AG04450 (cell line): ENCODE measurements at regions of chr3 and their contacts with region 1.

Region 1: DNA sequence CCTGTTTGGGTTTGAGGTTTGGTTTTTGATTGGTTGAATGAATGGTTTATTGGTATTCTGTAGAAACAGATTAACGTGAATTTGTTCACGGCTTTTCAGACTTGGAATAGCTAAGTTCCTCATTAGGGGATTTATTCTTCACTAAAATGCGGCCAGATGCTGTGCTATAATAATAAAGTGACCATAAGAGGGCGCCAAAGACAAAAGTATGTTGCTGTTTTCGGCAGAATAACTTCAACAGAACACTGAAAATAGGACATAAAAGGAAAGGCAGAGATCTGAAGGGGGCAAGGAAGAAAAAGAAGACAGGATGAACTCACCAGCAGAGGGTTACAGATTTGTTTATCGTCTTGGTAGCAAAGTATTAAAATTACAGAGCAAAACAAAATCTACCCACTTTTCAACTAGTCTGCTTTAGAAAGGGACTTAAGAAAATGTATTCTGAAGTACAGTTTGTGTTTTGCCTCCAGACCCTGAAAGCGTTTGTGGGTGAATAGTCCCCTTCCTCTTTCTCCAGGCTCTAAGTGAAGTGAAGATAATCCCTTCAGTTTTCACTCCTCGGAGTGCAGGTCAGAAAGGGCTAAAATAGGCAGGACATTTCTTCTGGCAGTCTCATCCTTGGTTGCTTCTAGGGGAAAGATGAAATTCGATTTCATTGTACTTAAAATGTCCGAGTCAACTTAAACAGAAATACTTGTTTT is 147.6 kb downstream of the IL20RB start:
- DNase-seq: peak; percentile 30
- H3K4me3 ChIP-seq: no peak overlapping the region
- H3K27ac ChIP-seq: no peak overlapping the region
- H3K27me3 ChIP-seq: peaks cover 8% of the 10 kb centered on the region
- CTCF ChIP-seq: peak; percentile 71

Region 2: DNA sequence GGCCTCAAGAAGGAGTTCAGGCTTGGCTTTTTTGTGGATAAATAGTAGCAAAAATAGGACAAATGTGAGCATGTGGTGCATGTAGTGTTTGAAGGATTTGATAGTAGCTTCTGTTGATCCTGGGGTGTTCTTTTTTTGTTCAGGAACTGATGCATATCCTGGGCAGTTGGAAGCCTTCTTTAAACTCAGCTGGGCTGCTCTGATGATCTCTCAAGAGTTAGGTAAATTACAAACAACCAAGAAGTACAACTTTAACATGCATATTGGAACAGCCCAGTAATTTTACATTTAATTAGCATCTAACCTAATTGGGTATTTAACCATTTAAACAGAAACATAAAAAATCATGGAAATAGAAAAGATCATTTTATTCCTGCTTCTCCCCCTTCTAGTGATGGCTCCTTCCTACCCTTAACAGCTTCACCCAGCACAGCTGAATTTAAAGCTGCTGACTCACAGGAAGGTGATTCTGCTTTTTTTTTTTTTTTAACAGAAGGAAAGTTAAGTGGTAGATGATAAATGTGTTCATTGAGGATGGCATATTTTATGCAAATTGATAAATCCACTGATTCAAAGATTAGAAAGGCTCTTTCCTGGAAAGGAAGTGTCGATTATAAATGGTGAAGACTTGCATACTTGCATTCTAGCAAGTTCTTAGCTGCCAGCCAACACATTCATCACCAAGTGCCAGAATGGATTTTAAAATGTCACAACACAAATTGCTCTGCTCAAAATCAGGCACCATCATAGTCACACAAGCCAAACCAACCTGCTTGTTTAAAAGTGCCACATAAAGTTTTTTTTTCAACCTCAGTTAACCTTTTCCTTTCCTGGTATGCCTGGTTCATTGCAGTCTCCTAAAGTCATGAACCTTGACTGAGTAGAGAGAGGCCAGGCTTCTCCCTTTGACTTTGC is 266.5 kb before region 1 on chr3:
- CTCF ChIA-PET with region 1: no interaction called
- POLR2A ChIA-PET with region 1: no interaction called
- DNase-seq: no peak
- H3K4me3 ChIP-seq: no peak overlapping the region
- H3K27ac ChIP-seq: no peak overlapping the region
- H3K27me3 ChIP-seq: no peaks in the 10 kb centered on the region
- CTCF ChIP-seq: no peak

Region 3: DNA sequence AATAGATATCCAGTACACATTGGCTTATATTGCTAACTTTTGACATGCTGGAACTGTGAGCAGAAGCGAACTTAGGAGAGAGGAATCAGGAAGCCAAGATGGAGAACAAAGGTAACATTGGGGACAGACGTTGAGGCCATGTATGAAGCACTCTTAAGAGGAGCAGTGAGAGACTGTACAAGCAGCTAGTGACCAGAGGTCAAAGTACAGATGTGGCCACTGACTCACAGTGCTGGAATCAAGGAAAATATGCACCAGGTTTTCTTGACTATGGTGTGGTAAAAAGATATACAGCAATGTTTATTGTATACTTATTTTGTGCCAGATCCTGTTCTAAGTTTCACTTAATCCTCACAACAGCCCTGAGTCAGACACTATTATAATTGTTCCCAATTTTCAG is 149.6 kb before region 1 on chr3:
- CTCF ChIA-PET with region 1: no interaction called
- POLR2A ChIA-PET with region 1: no interaction called
- DNase-seq: peak; percentile 81
- H3K4me3 ChIP-seq: no peak overlapping the region
- H3K27ac ChIP-seq: peak overlapping the region; percentile 68
- H3K27me3 ChIP-seq: no peaks in the 10 kb centered on the region
- CTCF ChIP-seq: no peak

Region 4: GRCh38 chr3:137084586-137084985 is 20.8 kb before region 1 on chr3:
- CTCF ChIA-PET with region 1: interaction called, 14 read pairs
- POLR2A ChIA-PET with region 1: no interaction called
- DNase-seq: no peak
- H3K4me3 ChIP-seq: no peak overlapping the region
- H3K27ac ChIP-seq: no peak overlapping the region
- H3K27me3 ChIP-seq: no peaks in the 10 kb centered on the region
- CTCF ChIP-seq: no peak

Region 5: GRCh38 chr3:137970914-137971831 is 865.7 kb after region 1 on chr3:
- CTCF ChIA-PET with region 1: interaction called, 35 read pairs
- POLR2A ChIA-PET with region 1: no interaction called
- DNase-seq: peak; percentile 20
- H3K4me3 ChIP-seq: no peak overlapping the region
- H3K27ac ChIP-seq: no peak overlapping the region
- H3K27me3 ChIP-seq: peaks cover 8% of the 10 kb centered on the region
- CTCF ChIP-seq: peak; percentile 94